Thyroid gland (tissue), 4 donors: ENCODE measurements at regions of chr18 and their contacts with region 1.

Region 1: GRCh38 chr18:76819416-76820136 is 2.8 kb upstream of the ZNF236 start:
- DNase-seq: no peak
- H3K4me3 ChIP-seq: no peak overlapping the region
- H3K27ac ChIP-seq: no peak overlapping the region
- H3K4me1 ChIP-seq: peaks cover 11 to 13% of the 10 kb centered on the region in 2 donors
- H3K27me3 ChIP-seq: no peaks in the 10 kb centered on the region
- CTCF ChIP-seq: no peak
- POLR2A ChIP-seq: no peak

Region 2: DNA sequence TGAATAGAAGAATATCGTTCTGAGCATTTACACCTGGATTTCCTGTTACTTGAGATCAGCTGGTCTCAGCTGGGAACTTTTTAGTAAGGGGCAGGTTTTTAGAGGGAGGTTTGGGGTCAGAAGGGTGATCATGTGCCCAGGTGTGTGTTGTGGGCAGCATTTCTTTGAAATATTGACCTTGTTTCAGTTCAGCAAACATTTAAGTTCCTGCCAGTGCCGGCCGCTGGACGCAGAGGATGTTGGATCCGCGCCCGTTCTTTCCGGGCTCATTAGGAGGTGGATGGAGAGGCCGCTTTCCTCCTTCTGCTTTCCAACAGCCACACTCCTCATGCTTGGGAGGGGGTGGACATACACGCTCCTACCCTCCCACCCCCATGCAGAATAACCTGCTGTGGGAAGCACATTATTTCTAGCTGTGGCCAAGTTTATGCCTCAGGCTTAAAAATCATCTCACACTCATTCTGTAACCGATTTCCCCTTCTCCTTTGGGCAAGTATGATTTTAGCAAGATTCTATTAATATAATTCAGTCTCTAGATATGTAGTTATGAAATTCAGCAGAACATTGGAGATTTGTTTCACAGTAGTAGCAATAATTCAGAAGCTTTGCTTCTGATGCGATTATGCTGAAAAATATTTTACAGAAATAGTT is 134.1 kb after region 1 on chr18:
- intact Hi-C with region 1: no loop called
- DNase-seq: peak; percentile 97 to 98
- H3K4me3 ChIP-seq: no peak overlapping the region
- H3K27ac ChIP-seq: peak overlapping the region; percentile 73 to 95 (median 89)
- H3K4me1 ChIP-seq: peaks cover 40 to 58% of the 10 kb centered on the region in 2 donors
- H3K27me3 ChIP-seq: no peaks in the 10 kb centered on the region
- CTCF ChIP-seq: no peak
- POLR2A ChIP-seq: no peak

Region 3: DNA sequence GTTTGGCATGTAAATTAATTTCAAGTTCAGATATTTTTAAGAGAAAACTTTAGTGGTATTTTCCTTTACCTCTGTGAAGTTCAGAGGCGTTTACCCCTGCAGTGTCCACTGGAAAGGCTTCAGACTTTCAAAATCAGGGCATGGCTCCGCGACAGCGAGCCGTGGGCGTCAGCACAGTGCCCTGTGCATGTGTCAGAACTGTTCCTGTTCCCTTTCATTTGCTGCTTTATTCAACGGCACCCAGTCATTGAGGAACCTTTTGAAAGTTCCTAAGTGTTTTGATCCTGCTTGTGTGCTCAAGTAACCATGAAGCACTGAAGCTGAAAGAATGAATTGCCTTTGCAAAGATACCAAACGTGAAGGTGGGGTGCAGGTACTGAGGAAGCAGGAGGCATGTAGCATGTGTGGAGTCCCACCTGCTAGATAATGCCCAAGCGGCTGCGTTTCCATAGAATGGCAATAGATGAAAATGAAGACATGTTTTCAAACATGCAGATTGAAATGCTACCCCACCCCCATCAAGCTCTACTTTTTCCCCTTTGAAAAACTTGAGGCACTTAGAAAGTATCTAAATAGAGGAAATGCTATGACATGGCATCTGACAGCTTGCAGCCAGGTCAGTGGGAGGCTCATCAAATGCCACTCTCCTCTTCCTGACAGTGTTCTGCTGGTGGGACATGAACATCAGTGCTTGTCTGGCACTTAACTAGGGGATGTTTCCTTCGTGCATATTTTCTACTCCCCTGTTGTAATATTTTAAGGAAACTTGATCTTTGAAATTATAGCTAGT is 151.4 kb after region 1 on chr18:
- intact Hi-C with region 1: no loop called
- DNase-seq: peak; percentile 83 to 85
- H3K4me3 ChIP-seq: no peak overlapping the region
- H3K27ac ChIP-seq: peak overlapping the region in 2 of 3 donors; percentile 11 to 39
- H3K4me1 ChIP-seq: peaks cover 11 to 26% of the 10 kb centered on the region in 2 donors
- H3K27me3 ChIP-seq: no peaks in the 10 kb centered on the region
- CTCF ChIP-seq: no peak
- POLR2A ChIP-seq: no peak

Region 4: GRCh38 chr18:77023102-77023782 is 203.7 kb after region 1 on chr18:
- intact Hi-C with region 1: no loop called
- DNase-seq: no peak
- H3K4me3 ChIP-seq: no peak overlapping the region
- H3K27ac ChIP-seq: no peak overlapping the region
- H3K4me1 ChIP-seq: no peaks in the 10 kb centered on the region
- H3K27me3 ChIP-seq: no peaks in the 10 kb centered on the region
- CTCF ChIP-seq: no peak
- POLR2A ChIP-seq: no peak

Region 5: GRCh38 chr18:77210249-77210648 is 390.7 kb after region 1 on chr18:
- intact Hi-C with region 1: loop called (anchors 10 kb)
- DNase-seq: no peak
- H3K4me3 ChIP-seq: no peak overlapping the region
- H3K27ac ChIP-seq: no peak overlapping the region
- H3K4me1 ChIP-seq: peaks cover 24 to 33% of the 10 kb centered on the region in 2 donors
- H3K27me3 ChIP-seq: no peaks in the 10 kb centered on the region
- CTCF ChIP-seq: no peak
- POLR2A ChIP-seq: no peak